ENCODE measurements at regions of chr12 and their contacts with region 1.

Region 1: DNA sequence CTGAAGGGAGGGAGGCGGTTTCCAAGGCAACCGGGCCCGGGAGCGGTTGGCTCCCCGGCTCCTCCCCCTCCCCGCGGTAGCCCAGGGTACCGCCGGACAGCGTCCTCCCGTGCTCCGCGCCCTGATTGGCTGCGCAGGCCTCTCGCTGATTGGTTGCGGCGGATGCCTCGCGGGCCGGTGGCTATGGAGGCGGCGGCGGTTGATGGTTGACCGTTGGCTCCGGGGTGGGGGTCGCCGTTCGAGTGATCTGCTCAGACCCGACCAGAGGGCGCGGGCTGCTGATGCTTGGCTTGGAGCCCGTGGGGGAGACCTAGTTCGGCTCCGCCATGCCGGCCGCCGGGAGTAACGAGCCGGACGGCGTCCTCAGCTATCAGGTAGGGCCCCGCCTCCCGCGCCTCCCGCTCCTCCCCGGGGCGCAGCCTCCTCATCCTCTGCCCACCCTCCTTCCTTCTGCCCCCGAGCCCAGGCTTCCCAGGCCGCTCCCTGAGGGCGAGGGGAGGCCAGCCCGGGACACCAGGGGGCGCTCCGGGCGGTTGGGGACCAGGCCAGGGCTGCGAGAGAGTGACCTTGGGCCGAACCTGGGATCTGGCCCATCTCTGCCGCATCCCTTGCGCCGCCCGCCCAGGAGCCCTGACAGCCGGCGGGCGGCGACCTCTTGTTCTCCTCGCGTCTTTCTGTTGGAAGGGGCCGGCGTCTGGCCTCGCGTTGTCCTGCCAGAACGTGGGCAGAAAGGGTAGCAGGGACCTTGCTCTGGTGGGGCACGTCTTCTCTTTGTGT is at the start of gene SLC4A8:
- H3K4me3 ChIP-seq: peak within 1 kb of the TSS; percentile 73
- H3K27ac ChIP-seq: no peak within 1 kb of the TSS
- H3K4me1 ChIP-seq: peaks cover 4% of the 10 kb centered on the region
- CTCF ChIP-seq: peak; percentile 95

Region 2: GRCh38 chr12:51511546-51512260 is 86.9 kb after region 1 on chr12:
- CTCF ChIA-PET with region 1: interaction called, 13 read pairs
- POLR2A ChIA-PET with region 1: no interaction called
- H3K4me3 ChIP-seq: no peak overlapping the region
- H3K27ac ChIP-seq: no peak overlapping the region
- H3K4me1 ChIP-seq: no peaks in the 10 kb centered on the region
- CTCF ChIP-seq: no peak

Region 3: GRCh38 chr12:51531978-51532497 is 107.2 kb after region 1 on chr12:
- CTCF ChIA-PET with region 1: interaction called, 115 read pairs
- POLR2A ChIA-PET with region 1: no interaction called
- H3K4me3 ChIP-seq: no peak overlapping the region
- H3K27ac ChIP-seq: no peak overlapping the region
- H3K4me1 ChIP-seq: peaks cover 4% of the 10 kb centered on the region; the same call in 1 of the 2 replicates
- CTCF ChIP-seq: peak; percentile 78

Region 4: GRCh38 chr12:51666696-51667095 is 241.8 kb after region 1 on chr12:
- CTCF ChIA-PET with region 1: no interaction called
- POLR2A ChIA-PET with region 1: no interaction called
- H3K4me3 ChIP-seq: no peak overlapping the region
- H3K27ac ChIP-seq: no peak overlapping the region
- H3K4me1 ChIP-seq: no peaks in the 10 kb centered on the region
- CTCF ChIP-seq: no peak

Region 5: DNA sequence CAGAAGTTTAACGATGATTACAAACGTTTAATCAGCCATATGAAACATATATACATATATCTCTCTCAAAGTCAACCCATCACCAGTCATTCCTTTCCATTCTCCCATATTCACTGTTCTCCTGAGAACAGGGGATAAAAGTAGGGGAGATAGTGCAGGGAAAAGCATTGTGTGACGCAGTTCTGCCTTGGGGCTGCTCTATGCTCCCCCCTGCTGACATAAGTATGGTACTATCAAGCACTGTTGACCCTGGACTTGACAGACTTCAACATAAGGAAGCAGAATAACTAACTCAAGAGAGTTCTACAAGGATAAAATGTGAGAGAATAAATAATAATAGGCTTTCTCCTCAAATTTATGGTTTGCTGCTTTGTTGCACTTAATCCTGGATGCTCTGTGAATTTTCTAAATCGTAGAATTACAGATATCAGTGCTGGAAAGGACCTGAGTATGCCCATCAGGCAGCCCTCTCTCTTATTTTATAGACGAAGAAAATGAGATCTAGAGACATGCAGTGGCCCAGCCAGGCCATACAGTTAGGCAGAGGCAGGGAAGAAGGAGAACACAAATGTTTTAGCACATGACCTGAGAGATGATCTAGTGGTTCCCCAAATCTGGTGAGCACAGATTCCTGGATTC is 253.4 kb after region 1 on chr12:
- CTCF ChIA-PET with region 1: interaction called, 19 read pairs
- POLR2A ChIA-PET with region 1: no interaction called
- H3K4me3 ChIP-seq: no peak overlapping the region
- H3K27ac ChIP-seq: no peak overlapping the region
- H3K4me1 ChIP-seq: peaks cover under 1% of the 10 kb centered on the region; the same call in 1 of the 2 replicates
- CTCF ChIP-seq: no peak

Region 6: DNA sequence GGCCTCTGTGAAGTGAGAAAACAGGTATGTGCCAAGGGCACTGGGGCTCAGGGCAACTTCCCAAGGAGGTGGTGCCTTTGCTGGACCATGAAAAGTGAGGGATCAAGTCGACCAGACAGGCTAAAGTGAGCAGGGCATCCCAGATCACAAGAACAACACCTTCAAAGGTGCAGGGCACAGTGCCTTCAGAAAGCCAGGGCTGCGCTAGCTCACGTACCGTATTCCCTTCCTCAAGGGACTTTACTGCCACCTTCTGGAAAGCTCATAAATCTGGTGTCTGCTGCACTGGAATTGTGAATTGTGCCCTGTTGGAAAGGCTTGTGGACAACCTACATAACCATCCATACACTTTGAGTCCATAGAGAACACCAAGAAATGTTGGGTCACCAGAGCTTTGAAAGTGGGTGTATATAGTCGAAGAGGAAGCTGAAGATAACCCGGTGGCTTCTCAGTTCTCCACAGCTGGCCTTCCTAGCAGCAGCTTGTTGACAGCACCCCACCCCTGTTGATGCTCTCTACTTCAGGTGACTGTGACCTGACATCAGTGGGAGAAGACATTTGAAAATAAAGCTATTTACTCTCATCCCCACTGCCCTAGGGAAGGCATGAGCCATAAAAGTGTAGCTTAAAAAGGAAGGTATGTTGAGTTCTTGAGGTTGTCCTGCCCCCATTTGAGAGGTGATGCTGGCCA is 399.2 kb after region 1 on chr12:
- CTCF ChIA-PET with region 1: interaction called, 54 read pairs
- POLR2A ChIA-PET with region 1: interaction called, 5 read pairs
- H3K4me3 ChIP-seq: no peak overlapping the region
- H3K27ac ChIP-seq: no peak overlapping the region
- H3K4me1 ChIP-seq: no peaks in the 10 kb centered on the region
- CTCF ChIP-seq: peak; percentile 52; the same call in 1 of the 2 replicates

Region 7: GRCh38 chr12:51871126-51871525 is 446.3 kb after region 1 on chr12:
- CTCF ChIA-PET with region 1: interaction called, 31 read pairs
- POLR2A ChIA-PET with region 1: no interaction called
- H3K4me3 ChIP-seq: no peak overlapping the region
- H3K27ac ChIP-seq: no peak overlapping the region
- H3K4me1 ChIP-seq: no peaks in the 10 kb centered on the region
- CTCF ChIP-seq: no peak

Measured in HEK293 (cell line).